Activated T-helper 2 cell treated with anti-CD3 and anti-CD28 coated beads, Interferon-gamma antibody, Interleukin-2, Interleukin-4, amounts not matched to agents 10 μg/mL and 5 μg/mL and 100 μg/mL, durations not matched to agents 14 hours and 24 hours and 36 hours (primary cell): ENCODE measurements at regions of chr2 and their contacts with region 1.

Region 1: DNA sequence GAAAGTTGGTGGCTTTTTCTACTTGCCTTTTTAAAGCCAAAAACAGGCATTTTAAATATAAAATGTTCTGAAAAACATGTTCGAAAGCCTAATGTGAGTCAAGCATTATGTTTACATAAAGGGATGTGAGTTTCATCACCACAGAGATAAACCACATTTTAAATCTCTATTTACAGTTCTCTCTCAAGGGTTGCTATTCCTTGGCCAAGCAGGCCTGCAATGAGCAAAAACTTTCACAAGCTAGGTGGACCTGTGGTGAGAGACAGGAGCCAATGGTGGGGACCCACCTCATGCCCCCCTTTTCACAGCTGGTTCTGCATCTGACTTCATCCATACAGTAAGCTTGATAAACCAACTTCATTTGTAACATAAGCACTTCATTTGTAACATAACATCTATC is 65.1 kb downstream of the CUL3 start:
- DNase-seq: peak; percentile 26
- H3K4me3 Mint-ChIP-seq: no peak overlapping the region
- H3K27ac Mint-ChIP-seq: peak overlapping the region; percentile 70
- H3K4me1 Mint-ChIP-seq: peaks cover 54% of the 10 kb centered on the region
- H3K27me3 Mint-ChIP-seq: no peaks in the 10 kb centered on the region

Region 2: DNA sequence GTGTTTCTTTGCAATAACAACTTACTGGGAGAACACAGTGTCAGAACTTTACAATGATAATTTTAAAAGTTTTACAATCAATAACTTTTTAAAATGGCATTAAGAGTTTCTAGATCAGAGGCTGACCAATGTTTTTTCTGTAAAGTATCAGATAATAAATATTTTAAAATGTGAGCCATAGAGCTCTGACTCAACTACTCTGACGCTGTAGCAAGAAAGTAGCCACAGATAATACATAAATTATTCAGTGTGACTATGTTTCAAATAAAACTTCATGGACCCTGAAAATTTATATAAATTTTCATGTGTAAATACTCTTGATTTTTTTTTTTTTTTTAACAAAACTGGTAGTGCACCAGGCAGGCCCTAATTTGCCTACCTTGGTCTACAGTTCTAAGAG is 12.3 kb before region 1 on chr2:
- intact Hi-C with region 1: no loop called
- DNase-seq: no peak
- H3K4me3 Mint-ChIP-seq: no peak overlapping the region
- H3K27ac Mint-ChIP-seq: no peak overlapping the region
- H3K4me1 Mint-ChIP-seq: peaks cover 5% of the 10 kb centered on the region
- H3K27me3 Mint-ChIP-seq: no peaks in the 10 kb centered on the region

Region 3: GRCh38 chr2:224561234-224562005 is 41.4 kb after region 1 on chr2:
- intact Hi-C with region 1: loop called (anchors 2 kb)
- DNase-seq: no peak
- H3K4me3 Mint-ChIP-seq: no peak overlapping the region
- H3K27ac Mint-ChIP-seq: no peak overlapping the region
- H3K4me1 Mint-ChIP-seq: peaks cover 17% of the 10 kb centered on the region
- H3K27me3 Mint-ChIP-seq: no peaks in the 10 kb centered on the region